ENCODE measurements at regions of chr4 and their contacts with region 1.

Region 1: GRCh38 chr4:143335979-143336780 is 496 bp upstream of the GAB1 start:
- H3K4me3 Mint-ChIP-seq: peak overlapping the region; percentile 93
- H3K27ac Mint-ChIP-seq: peak overlapping the region; percentile 91
- H3K4me1 Mint-ChIP-seq: peaks cover 31% of the 10 kb centered on the region
- H3K27me3 Mint-ChIP-seq: peaks cover 4% of the 10 kb centered on the region

Region 2: GRCh38 chr4:143207557-143207956 is 128.6 kb before region 1 on chr4:
- intact Hi-C with region 1: loop called (anchors 5 kb)
- H3K4me3 Mint-ChIP-seq: no peak overlapping the region
- H3K27ac Mint-ChIP-seq: no peak overlapping the region
- H3K4me1 Mint-ChIP-seq: no peaks in the 10 kb centered on the region
- H3K27me3 Mint-ChIP-seq: no peaks in the 10 kb centered on the region

Region 3: GRCh38 chr4:143375313-143376073 is 39.3 kb after region 1 on chr4:
- intact Hi-C with region 1: loop called (anchors 5 kb)
- H3K4me3 Mint-ChIP-seq: no peak overlapping the region
- H3K27ac Mint-ChIP-seq: no peak overlapping the region
- H3K4me1 Mint-ChIP-seq: peaks cover 24% of the 10 kb centered on the region
- H3K27me3 Mint-ChIP-seq: no peaks in the 10 kb centered on the region

Region 4: DNA sequence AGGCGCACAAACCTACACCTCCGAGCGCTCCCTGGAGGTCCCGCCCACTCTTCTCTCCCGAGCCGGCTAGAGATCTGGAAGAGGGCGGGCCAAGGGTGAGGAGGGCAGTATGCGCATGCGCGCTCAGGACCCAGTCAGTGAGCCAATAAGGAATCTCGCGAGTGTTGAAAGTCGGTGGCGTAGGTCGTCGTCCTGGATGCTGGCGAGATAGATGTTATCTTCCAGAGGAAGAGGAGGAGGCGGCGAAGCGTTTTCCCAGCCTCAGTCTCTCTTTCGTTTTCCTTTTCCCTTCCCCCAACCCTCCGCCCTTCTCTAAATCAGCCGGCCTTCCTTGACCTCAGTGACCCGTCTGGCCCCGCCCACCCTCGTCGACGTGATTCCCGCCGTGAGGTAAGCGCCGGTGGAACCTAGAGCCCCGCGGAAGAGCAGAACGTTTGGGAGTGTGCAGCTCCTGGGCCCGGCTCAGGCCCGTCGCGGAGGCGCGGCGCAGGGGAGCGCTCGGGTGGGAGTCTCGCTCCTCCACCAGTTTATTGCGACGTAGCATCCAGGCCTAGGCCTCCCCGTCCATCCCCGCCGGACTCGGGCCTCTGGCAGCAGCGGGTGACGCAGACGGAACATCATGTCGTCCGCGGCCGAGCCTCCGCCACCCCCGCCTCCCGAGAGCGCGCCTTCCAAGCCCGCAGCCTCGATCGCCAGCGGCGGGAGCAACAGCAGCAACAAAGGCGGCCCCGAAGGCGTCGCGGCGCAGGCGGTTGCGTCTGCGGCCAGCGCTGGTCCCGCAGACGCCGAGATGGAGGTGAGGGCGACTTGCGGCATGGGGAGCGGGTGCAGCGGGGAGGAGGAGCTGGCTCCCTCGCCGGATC is 177.4 kb after region 1 on chr4 and contains the start of gene SMARCA5:
- intact Hi-C with region 1: loop called (anchors 1 kb)
- H3K4me3 Mint-ChIP-seq: peak within 1 kb of the TSS; percentile 91
- H3K27ac Mint-ChIP-seq: peak within 1 kb of the TSS; percentile 99
- H3K4me1 Mint-ChIP-seq: peaks cover 22% of the 10 kb centered on the region
- H3K27me3 Mint-ChIP-seq: peaks cover 1% of the 10 kb centered on the region

Measured in dendritic cell treated with granulocyte-macrophage colony-stimulating factor and Interleukin-4, amounts not matched to agents 40 ng/mL and 50 ng/mL, for 4 days (primary cell).